BJ (cell line): ENCODE measurements at regions of chr5 and their contacts with region 1.

Region 1: DNA sequence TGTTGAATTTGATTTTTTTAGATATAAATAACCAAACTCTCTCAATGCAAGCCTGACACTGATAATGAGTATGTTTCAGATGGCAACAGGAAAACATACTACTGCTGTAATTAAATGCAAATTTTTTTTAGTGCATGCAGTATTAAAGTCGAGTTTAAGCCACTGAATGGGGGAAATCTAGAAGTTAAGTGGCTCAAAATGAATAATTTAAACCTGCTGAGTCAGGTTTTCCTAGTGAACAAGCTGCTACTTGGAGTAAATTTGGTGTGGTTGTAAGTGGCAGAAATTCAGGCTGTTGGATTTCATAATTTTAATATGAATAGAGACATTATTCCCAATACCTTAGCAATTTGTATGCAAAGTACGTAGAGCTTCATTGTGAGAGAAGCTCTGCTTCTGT is 121.8 kb downstream of the SLF1 start:
- DNase-seq: no peak
- H3K4me3 ChIP-seq: no peak overlapping the region
- H3K27me3 ChIP-seq: no peaks in the 10 kb centered on the region
- CTCF ChIP-seq: no peak

Region 2: DNA sequence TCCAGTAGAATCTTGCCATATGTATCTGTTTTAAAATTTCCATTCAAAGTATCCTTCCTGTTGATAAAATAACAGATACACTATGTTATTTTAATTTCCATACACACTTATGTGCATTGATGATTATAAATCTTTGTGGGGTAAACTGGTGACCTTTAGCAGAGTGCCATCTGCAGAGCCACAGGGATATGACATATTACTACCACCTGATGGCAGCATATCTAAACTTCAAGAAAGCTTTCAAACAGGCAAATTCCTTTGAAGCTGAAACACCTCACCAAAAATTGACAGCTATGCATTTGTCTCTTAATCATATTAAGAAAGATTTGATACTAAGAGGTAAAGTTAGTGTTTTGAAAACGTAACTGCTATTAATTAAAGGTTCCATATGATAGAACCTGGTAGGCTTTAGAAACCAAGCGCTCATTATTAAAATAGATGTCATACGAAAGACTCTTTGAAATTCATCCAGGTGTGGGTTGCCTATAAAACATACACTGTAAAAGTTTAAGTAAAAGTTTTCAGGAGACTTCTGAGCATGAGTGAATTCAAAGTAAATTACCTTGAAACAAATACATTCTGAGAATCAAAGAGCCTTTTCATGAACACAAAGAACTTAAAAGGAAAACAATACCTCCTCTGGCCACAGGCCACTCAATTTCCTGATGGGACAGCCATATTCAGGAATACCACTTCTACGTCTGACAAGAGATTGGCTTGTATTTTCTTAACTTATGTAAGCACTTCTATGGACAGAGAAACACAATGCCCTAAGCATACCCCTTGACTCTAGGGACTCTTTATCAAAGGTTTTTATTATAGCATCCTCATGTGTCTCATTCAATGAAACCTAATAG is 215.2 kb before region 1 on chr5:
- CTCF ChIA-PET with region 1: interaction called, 34 read pairs
- POLR2A ChIA-PET with region 1: no interaction called
- DNase-seq: no peak
- H3K4me3 ChIP-seq: no peak overlapping the region
- H3K27me3 ChIP-seq: no peaks in the 10 kb centered on the region
- CTCF ChIP-seq: peak; percentile 59

Region 3: GRCh38 chr5:94725142-94725541 is 15.1 kb before region 1 on chr5:
- CTCF ChIA-PET with region 1: interaction called, 17 read pairs
- POLR2A ChIA-PET with region 1: no interaction called
- DNase-seq: no peak
- H3K4me3 ChIP-seq: no peak overlapping the region
- H3K27me3 ChIP-seq: no peaks in the 10 kb centered on the region
- CTCF ChIP-seq: no peak